PC-9 (cell line): ENCODE measurements at regions of chr1 and their contacts with region 1.

Region 1: DNA sequence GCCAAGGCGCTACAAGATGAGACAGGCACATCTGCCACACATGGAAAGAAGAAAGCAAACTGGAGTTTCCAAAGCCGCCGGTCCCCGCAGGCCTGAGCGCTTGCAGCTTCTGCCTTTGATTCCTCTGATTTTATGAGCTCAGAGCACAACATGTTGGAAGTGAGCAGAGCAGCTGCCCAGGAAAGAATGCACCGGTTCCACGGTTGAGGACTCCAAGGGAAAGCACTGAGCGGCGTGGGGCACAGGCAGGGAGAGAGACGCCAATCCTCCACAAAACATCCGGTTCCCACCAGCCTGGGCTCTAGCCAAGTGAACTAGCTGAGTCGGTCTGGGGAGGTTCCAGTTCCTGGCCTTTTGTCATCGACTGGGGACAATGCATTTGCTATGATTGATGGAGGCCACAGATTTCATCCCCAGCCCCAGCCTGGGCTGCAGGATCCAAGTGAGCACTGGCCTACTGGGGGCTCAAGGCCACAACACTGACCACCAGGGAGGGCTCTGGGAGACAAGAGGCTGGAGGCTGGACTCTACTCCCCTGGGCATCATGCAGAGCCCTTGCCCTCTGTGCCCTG is 253.1 kb upstream of the IRF2BP2 start:
- DNase-seq: no peak
- H3K4me3 ChIP-seq: no peak overlapping the region
- H3K27ac ChIP-seq: no peak overlapping the region
- H3K4me1 ChIP-seq: peaks cover 56% of the 10 kb centered on the region
- H3K27me3 ChIP-seq: no peaks in the 10 kb centered on the region
- CTCF ChIP-seq: no peak

Region 2: DNA sequence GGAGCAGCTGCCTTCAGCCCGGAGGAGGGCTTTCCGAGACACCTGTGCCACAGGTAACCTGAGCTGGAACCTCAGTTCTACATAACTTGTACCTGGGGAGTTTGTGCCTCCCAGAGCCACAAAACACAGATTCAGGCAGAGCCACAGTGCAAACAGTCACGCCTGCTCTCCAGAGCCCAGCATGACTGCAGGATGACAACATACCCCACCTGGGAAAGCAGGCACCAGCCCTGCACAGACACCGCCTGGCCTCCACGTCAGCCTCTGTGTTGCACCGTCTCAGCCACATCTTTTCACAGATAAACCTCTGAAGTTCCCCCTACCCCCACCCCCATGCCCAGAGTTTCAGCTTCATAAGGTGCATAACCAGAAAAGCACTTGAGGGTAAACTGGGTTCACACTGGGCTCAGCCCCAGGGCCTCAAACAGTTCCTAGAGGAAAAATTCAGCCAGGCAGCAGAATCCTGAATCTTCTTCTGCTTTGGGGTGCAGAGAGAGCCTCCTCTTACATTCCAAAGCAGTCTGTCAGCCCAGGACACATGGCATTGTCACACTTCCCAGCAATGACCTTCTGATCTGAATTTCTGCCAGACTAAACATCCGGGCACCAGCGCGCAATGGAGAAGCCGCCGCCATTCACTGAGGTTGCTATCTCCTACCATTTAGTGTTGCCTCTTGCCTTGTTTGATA is 36.2 kb after region 1 on chr1:
- CTCF ChIA-PET with region 1: no interaction called
- POLR2A ChIA-PET with region 1: no interaction called
- intact Hi-C with region 1: loop called (anchors 2 kb)
- DNase-seq: peak; percentile 82
- H3K4me3 ChIP-seq: no peak overlapping the region
- H3K27ac ChIP-seq: peak overlapping the region; percentile 59
- H3K4me1 ChIP-seq: peaks cover 67% of the 10 kb centered on the region
- H3K27me3 ChIP-seq: no peaks in the 10 kb centered on the region
- CTCF ChIP-seq: no peak

Region 3: DNA sequence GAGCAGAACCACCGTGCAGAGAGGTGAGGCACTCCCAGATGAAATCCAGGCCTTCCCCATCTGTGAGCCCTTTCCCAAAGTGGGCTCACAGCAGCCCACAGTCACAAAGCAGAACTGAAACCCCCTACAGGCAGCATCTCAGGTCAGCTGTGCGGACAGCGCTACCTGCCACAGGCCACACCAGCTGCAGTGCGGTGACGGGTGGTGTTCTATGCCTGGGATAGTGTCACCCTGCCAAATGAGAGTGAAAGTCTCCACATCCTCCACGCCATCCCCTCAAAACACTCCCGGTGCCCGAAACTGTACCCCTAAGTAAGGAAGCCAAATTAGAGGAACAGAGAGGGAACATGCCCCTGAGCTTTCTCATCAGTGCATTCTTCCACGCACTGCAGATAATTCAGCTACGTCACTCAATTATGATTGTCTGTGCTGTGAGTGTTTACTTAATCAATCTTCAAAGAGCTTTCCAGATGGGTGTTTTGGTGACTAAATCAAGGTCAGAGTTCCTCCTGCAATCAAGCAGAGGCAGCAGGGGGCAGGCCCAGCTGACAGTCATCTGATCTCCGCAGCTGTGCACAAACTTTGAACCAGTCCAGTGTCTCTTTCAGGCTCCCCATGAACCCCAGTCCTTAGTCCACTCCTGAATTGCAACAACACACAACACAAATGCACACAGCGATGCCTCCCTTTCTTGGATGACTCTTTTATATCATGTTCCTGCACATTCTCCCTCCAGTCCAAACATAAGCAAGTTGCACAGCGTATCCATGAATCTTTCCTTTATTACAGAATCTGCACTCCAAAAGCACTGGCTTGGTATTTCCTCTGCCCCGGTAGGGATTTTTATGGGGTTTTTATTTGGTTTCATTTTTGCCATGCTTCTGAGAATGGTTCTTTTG is 115.6 kb after region 1 on chr1:
- CTCF ChIA-PET with region 1: no interaction called
- POLR2A ChIA-PET with region 1: no interaction called
- intact Hi-C with region 1: loop called (anchors 1 kb)
- DNase-seq: peak; percentile 45 to 93
- H3K4me3 ChIP-seq: peak overlapping the region; percentile 30; the same call in 1 of the 2 replicates
- H3K27ac ChIP-seq: peak overlapping the region; percentile 99
- H3K4me1 ChIP-seq: peaks cover 99% of the 10 kb centered on the region
- H3K27me3 ChIP-seq: no peaks in the 10 kb centered on the region
- CTCF ChIP-seq: no peak

Region 4: DNA sequence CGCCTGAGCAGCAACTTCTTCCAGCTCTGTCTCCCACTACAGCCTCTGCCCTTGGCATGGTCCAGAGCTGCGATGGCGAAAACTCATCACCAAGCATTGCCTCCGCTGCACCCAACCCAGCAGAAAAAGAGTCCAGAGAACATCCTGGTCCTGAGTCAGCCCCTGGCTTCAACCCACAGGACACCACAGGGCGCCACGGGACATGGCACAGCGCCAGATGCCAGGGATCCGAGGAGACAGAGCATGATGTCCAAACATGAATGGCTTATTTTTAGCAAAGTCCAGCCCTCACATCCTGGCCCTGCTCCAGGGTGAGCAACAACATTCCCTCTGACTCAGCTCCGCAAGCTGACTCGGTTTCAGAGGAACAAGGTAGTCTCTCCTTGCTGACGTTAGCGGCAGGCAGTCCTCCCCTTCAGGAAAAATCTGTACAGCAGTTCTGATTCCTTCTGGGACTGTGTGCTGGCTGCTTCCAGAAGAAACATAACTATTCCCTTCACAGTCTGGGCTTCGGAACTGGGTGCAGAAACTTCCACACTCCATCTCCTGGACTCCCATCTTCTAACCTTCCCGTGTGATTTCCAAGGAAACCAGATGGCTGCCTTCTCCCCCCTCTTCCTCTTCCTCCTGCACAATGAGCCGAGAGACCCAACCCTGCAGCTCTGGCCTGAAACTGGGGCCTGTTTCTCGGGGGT is 134.3 kb after region 1 on chr1:
- CTCF ChIA-PET with region 1: no interaction called
- POLR2A ChIA-PET with region 1: no interaction called
- intact Hi-C with region 1: loop called (anchors 1 kb)
- DNase-seq: peak; percentile 99 to 100
- H3K4me3 ChIP-seq: peak overlapping the region; percentile 45
- H3K27ac ChIP-seq: peak overlapping the region; percentile 100
- H3K4me1 ChIP-seq: peaks cover 34% of the 10 kb centered on the region
- H3K27me3 ChIP-seq: no peaks in the 10 kb centered on the region
- CTCF ChIP-seq: no peak

Region 5: GRCh38 chr1:235024711-235025421 is 161.8 kb after region 1 on chr1:
- CTCF ChIA-PET with region 1: no interaction called
- POLR2A ChIA-PET with region 1: interaction called, 26 read pairs
- intact Hi-C with region 1: no loop called
- DNase-seq: no peak
- H3K4me3 ChIP-seq: no peak overlapping the region
- H3K27ac ChIP-seq: no peak overlapping the region
- H3K4me1 ChIP-seq: peaks cover 22% of the 10 kb centered on the region
- H3K27me3 ChIP-seq: no peaks in the 10 kb centered on the region
- CTCF ChIP-seq: no peak